CD4-positive, alpha-beta T cell (primary cell): ENCODE measurements at regions of chrX and their contacts with region 1.

Region 1: DNA sequence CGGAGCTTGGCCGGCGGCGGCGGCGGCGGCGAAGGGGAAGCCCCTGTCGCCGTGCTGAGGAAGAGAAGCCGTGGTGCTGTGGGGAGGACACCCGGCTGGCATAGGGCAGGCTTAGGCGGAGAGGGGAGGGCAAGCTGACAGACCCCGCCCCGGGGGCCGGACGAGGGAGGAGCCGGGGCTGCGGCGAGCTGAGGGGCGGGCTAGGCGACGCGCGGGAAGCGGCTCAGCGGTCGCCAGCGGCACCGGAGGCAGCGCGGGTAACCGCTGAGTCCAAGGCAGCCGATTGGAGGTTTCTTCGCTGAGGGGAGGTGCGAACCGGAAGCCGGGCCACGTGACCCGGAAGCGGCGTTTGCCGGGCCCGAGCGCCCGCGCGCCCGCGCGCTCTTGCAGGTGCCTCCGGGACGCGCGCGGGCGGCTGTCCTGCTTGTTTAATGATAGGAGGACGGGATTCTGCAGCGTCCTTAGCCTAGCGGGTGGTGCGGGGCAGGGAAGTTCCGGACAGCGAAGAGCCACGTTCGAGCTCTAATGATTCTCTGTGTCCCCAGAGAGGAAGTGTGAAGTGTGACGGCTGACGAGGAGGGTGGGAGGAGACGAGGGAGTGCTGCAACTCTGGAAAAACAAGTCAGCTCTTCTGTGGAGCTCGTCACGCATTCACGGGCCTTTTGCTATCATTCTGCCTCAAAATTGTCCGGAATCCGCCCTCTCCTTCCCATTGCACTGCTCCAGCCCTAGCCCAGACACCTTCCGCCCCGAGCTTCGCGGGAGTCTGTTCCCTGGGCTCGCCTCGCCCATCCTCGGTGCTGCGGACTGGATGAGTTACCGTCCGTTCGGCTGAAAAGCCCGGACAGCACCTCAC is at the start of gene AP1S2:
- DNase-seq: peak; percentile 84 to 99 (median 94)
- ATAC-seq: peak; percentile 94
- H3K4me3 ChIP-seq: peak within 1 kb of the TSS; percentile 81
- H3K4me3 Mint-ChIP-seq: peak within 1 kb of the TSS; percentile 97
- H3K27ac ChIP-seq: peak within 1 kb of the TSS; percentile 87 to 89
- H3K27ac Mint-ChIP-seq: peak within 1 kb of the TSS; percentile 100
- H3K4me1 ChIP-seq: peaks cover 5% of the 10 kb centered on the region
- H3K4me1 Mint-ChIP-seq: peaks cover 38% of the 10 kb centered on the region
- H3K27me3 ChIP-seq: no peaks in the 10 kb centered on the region
- H3K27me3 Mint-ChIP-seq: no peaks in the 10 kb centered on the region
- CTCF ChIP-seq: no peak
- total RNA-seq, gene AP1S2: 20.0 to 20.8 TPM

Region 2: DNA sequence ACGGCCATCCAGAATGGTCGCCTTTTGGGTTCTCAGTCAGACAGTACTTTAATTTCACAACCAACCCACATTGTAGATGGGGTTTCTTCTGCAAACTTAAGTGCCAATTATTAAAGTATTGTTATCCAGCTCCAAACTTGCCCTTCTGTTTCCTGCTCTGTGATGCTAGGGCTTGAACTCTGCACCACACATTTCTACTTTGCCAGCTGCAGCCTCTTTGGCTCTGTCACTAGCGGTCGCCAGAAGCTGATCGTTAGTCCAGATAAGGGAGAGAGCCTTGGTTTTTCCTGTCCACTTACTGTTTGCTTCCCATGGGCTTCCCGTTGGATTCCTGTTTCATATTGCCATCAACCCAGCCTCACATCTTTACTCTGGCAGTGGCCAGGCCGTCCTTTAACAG is 781.6 kb before region 1 on chrX:
- CTCF ChIA-PET with region 1: no interaction called
- POLR2A ChIA-PET with region 1: no interaction called
- intact Hi-C with region 1: no loop called
- DNase-seq: no peak
- ATAC-seq: no peak
- H3K4me3 ChIP-seq: no peak overlapping the region
- H3K4me3 Mint-ChIP-seq: no peak overlapping the region
- H3K27ac ChIP-seq: no peak overlapping the region
- H3K27ac Mint-ChIP-seq: no peak overlapping the region
- H3K4me1 ChIP-seq: no peaks in the 10 kb centered on the region
- H3K4me1 Mint-ChIP-seq: no peaks in the 10 kb centered on the region
- H3K27me3 ChIP-seq: no peaks in the 10 kb centered on the region
- H3K27me3 Mint-ChIP-seq: no peaks in the 10 kb centered on the region
- CTCF ChIP-seq: no peak

Region 3: DNA sequence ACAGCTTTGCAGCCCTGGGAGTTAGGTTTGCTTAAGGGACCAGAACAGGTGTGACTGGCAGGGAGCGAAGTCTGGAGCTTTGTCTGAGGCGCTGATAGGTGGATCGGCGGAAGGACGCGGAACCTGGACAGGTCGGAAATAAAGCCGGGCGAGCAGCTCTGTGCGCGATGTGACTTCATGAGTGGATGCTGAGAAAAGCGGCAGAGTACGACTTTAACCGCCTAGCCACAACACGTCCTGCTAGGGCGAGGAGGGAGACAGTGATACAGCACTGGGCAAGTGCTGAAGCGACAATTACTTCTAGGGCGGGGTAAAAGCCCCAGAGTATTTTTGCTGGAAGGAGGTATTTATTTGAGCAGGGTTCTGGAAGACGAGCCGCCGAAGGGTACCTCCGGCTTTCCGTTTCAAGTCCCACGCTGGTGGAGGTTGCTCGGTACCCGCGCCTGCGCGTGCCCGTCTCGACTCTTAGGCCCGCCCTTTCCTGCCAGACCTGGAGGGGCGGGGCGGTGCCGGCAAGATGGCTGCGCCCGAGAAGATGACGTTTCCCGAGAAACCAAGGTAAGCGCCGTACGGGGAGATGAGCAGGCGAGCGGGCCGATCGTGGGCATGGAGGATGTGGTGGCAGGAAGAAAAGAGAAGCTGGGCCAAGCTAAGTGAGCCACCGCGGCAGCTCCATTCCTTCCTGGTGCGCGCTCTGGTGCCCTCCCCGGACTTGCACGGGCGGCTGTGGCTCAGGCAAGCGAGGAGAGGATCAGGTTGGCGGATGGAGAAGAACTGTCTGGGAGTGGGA is 64.8 kb before region 1 on chrX and contains the start of gene ZRSR2:
- CTCF ChIA-PET with region 1: interaction called, 3 read pairs
- POLR2A ChIA-PET with region 1: interaction called, 41 read pairs
- intact Hi-C with region 1: loop called in 1 of 2 experiments (anchors 5 kb)
- DNase-seq: peak; percentile 72 to 94 (median 86)
- ATAC-seq: peak; percentile 90
- H3K4me3 ChIP-seq: peak within 1 kb of the TSS; percentile 86
- H3K4me3 Mint-ChIP-seq: no peak within 1 kb of the TSS
- H3K27ac ChIP-seq: peak within 1 kb of the TSS; percentile 87 to 92
- H3K27ac Mint-ChIP-seq: no peak within 1 kb of the TSS
- H3K4me1 ChIP-seq: peaks cover 27% of the 10 kb centered on the region
- H3K4me1 Mint-ChIP-seq: peaks cover 13% of the 10 kb centered on the region
- H3K27me3 ChIP-seq: no peaks in the 10 kb centered on the region
- H3K27me3 Mint-ChIP-seq: no peaks in the 10 kb centered on the region
- CTCF ChIP-seq: no peak
- total RNA-seq, gene ZRSR2: 18.4 to 21.1 TPM

Region 4: DNA sequence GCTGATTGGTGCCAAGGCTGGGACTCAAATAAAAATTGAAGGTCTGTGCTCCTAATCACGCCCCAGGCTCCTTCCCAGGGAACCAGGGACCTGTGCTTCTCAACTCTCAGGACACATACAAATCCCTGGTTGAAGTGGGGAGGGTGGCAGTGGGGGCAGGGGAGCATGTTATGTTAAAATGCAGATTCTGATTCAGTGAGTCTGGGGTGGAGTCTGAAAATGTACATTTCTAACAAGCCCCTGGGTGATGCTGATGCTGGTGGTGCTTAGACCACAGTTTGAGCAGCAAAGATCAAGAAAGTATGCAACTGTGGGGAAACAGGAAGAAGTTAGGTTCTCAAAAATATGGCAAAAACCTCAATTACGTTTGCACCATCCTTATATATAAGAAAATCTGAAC is 548.9 kb after region 1 on chrX:
- CTCF ChIA-PET with region 1: no interaction called
- POLR2A ChIA-PET with region 1: no interaction called
- intact Hi-C with region 1: no loop called
- DNase-seq: no peak
- ATAC-seq: no peak
- H3K4me3 ChIP-seq: no peak overlapping the region
- H3K4me3 Mint-ChIP-seq: no peak overlapping the region
- H3K27ac ChIP-seq: no peak overlapping the region
- H3K27ac Mint-ChIP-seq: no peak overlapping the region
- H3K4me1 ChIP-seq: no peaks in the 10 kb centered on the region
- H3K4me1 Mint-ChIP-seq: no peaks in the 10 kb centered on the region
- H3K27me3 ChIP-seq: no peaks in the 10 kb centered on the region
- H3K27me3 Mint-ChIP-seq: peaks cover 6% of the 10 kb centered on the region
- CTCF ChIP-seq: no peak

Region 5: DNA sequence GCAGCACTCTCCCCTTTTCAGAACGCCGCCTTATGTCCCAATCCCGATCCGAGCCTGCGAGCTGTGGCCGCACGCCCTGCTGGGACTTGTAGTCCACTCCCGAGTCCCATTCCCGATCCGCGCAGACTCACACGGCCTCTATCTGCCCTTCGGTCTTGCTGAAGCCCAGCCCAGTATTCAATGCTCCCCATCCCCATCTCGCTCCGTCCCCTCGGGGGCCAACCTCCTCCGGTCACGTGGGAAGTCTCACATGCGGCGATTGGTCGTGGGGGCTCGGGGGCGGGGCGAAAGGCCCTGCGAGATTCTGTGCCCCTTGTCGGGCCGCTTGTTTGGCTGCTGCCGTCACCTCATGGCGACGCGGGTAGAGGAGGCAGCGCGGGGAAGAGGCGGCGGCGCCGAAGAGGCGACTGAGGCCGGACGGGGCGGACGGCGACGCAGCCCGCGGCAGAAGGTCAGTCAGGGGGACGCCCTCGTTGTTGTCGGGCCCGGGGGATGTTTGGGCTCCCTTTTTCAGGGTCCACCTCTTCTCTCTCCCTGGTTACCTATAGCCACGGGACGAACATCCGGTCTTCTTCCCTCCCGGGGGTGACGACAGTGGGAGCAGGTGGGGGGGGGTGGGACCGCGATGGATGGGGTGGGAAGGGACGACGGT is 931.3 kb after region 1 on chrX and contains the start of gene TXLNG:
- CTCF ChIA-PET with region 1: no interaction called
- POLR2A ChIA-PET with region 1: no interaction called
- intact Hi-C with region 1: loop called in 1 of 2 experiments (anchors 10 kb)
- DNase-seq: peak; percentile 85 to 98 (median 94)
- ATAC-seq: peak; percentile 94
- H3K4me3 ChIP-seq: peak within 1 kb of the TSS; percentile 76
- H3K4me3 Mint-ChIP-seq: peak within 1 kb of the TSS; percentile 97
- H3K27ac ChIP-seq: peak within 1 kb of the TSS; percentile 84 to 87
- H3K27ac Mint-ChIP-seq: peak within 1 kb of the TSS; percentile 84
- H3K4me1 ChIP-seq: peaks cover 12% of the 10 kb centered on the region
- H3K4me1 Mint-ChIP-seq: peaks cover 29% of the 10 kb centered on the region
- H3K27me3 ChIP-seq: no peaks in the 10 kb centered on the region
- H3K27me3 Mint-ChIP-seq: no peaks in the 10 kb centered on the region
- CTCF ChIP-seq: no peak
- total RNA-seq, gene TXLNG: 17.2 to 17.5 TPM